Ascending aorta (tissue), 2 donors: ENCODE measurements at regions of chr9 and their contacts with region 1.

Region 1: GRCh38 chr9:76818271-76818670 is 54.0 kb downstream of the PCA3 start:
- DNase-seq: peak; percentile 82 to 96
- H3K4me3 ChIP-seq: no peak overlapping the region
- H3K27ac ChIP-seq: peak overlapping the region; percentile 84 to 90
- H3K4me1 ChIP-seq: peaks cover 3 to 24% of the 10 kb centered on the region in 2 donors
- H3K27me3 ChIP-seq: no peaks in the 10 kb centered on the region
- CTCF ChIP-seq: no peak

Region 2: DNA sequence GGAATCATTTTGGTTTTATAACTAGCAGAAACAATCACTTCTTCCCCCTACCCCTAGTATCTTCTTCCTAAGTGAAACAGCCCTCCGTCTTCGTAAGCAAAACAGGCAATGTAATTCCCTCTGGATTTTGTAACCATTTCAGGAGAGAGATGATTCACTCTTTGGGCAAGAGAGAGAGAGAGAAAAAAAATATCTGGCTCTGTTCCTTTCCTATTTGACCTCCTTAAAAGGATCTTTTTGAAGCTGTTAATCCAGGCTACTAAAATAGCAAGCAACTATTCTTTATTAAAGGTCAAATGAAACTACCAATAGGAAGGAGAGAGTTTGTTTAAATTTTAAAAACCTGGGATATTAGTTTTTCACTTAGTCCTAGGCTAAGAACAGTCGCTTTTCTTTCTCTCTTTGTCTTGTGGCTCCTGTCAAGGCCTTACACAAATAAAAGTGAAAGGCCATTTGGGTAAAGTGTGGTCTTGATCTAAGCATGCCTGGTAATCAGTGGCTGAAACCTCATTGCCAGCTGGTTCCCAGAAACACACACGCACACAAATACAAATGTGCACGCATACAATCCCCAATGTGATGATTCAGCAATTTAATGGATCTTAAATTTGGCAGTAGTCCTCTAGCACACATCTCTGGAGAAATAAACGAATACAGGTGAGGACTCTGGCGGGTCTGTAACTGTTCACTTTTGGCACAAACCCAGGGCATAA is 17.5 kb after region 1 on chr9:
- intact Hi-C with region 1: loop called (anchors 2 kb)
- DNase-seq: peak in 1 of 2 donors; percentile 66
- H3K4me3 ChIP-seq: peak overlapping the region; percentile 10 to 28
- H3K27ac ChIP-seq: peak overlapping the region; percentile 86 to 94
- H3K4me1 ChIP-seq: peaks cover 0 to 31% of the 10 kb centered on the region in 2 donors
- H3K27me3 ChIP-seq: no peaks in the 10 kb centered on the region
- CTCF ChIP-seq: no peak